HCT116 (cell line): ENCODE measurements at regions of chr6 and their contacts with region 1.

Region 1: GRCh38 chr6:122491919-122492555 is 20.4 kb upstream of the SERINC1 start:
- DNase-seq: peak; percentile 62
- ATAC-seq: peak; percentile 100
- H3K4me3 ChIP-seq: no peak overlapping the region
- H3K27ac ChIP-seq: no peak overlapping the region
- H3K4me1 ChIP-seq: no peaks in the 10 kb centered on the region
- H3K27me3 ChIP-seq: no peaks in the 10 kb centered on the region
- CTCF ChIP-seq: peak; percentile 88 to 97 (median 92)
- POLR2A ChIP-seq: no peak
- RAD21 ChIP-seq: peak; percentile 91

Region 2: DNA sequence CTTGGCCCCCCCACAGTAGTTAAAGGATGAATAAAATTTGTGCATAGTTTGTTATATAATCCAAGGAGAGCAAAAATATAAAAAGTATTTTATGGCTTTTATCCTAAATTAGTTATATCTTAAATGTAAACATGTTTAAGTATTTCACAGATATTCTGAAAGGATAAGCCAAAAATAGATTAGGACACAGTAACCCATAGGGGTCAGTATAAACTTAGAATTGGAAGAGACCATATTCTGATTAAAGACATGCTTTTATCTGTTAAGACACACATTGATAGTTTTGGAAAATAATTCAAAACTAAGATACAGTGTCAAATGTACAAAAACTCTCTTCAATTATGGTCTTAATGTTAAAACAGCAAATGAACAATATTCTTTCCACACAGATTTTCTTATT is 15.9 kb before region 1 on chr6:
- CTCF ChIA-PET with region 1: interaction called, 11 read pairs
- POLR2A ChIA-PET with region 1: no interaction called
- RAD21 ChIA-PET with region 1: no interaction called
- intact Hi-C with region 1: no loop called
- DNase-seq: no peak
- ATAC-seq: no peak
- H3K4me3 ChIP-seq: no peak overlapping the region
- H3K27ac ChIP-seq: no peak overlapping the region
- H3K4me1 ChIP-seq: peaks cover 0 to 4% of the 10 kb centered on the region in 2 experiments; a peak in 1 of 4 replicates
- H3K27me3 ChIP-seq: no peaks in the 10 kb centered on the region
- CTCF ChIP-seq: peak; percentile 33 to 77 (median 61); a peak in 5 of 6 replicates
- POLR2A ChIP-seq: no peak
- RAD21 ChIP-seq: peak; percentile 73

Region 3: DNA sequence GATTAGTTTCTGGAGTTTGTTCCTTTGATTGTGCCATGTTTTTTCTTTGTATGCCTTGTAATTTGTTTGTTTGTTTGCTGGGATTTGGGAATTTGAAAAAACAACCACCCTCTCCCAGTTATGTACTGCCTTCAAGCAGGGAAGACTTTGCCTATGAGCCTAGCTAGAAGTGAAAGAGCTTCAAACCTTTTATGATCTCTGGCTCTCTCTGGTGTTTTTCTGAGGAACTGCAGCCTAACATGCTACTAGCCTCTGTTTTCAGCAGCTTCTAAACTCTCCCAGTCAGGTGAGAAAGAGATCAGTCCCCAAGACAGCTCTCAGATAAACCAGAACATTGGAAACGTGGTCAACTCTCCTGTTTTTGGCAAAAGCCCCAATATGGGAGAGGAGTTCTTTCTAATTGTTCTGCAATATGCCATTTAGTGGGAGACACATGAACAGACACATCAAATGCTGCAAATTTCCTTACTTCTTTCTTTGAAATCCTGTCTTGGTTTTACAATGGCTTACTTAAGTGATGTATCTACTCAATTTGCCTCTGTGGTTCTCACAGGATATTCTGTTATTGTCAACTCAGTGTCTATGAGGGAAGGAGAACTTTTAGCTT is 38.5 kb after region 1 on chr6:
- CTCF ChIA-PET with region 1: interaction called, 103 read pairs
- POLR2A ChIA-PET with region 1: no interaction called
- RAD21 ChIA-PET with region 1: interaction called, 12 to 17 read pairs
- intact Hi-C with region 1: loop called (anchors 1 kb)
- DNase-seq: peak; percentile 62
- ATAC-seq: peak; percentile 98
- H3K4me3 ChIP-seq: no peak overlapping the region
- H3K27ac ChIP-seq: no peak overlapping the region
- H3K4me1 ChIP-seq: no peaks in the 10 kb centered on the region
- H3K27me3 ChIP-seq: no peaks in the 10 kb centered on the region
- CTCF ChIP-seq: peak; percentile 71 to 90 (median 90)
- POLR2A ChIP-seq: no peak
- RAD21 ChIP-seq: peak; percentile 84